Uterus (tissue), 4 donors: ENCODE measurements at regions of chr3 and their contacts with region 1.

Region 1: GRCh38 chr3:155805802-155806618 is at the start of gene C3orf33:
- DNase-seq: peak; percentile 38 to 62
- H3K4me3 ChIP-seq: peak within 1 kb of the TSS; percentile 70 to 79
- H3K27ac ChIP-seq: peak within 1 kb of the TSS; percentile 75 to 85
- H3K4me1 ChIP-seq: no peaks in the 10 kb centered on the region
- H3K27me3 ChIP-seq: no peaks in the 10 kb centered on the region
- CTCF ChIP-seq: peak; percentile 62 to 95 (median 82)
- POLR2A ChIP-seq: peak in 1 of 2 donors; percentile 38
- total RNA-seq, gene C3orf33: 0.88 to 9.0 (median 2.7) TPM

Region 2: GRCh38 chr3:155701882-155702465 is 104.0 kb before region 1 on chr3:
- intact Hi-C with region 1: no loop called
- DNase-seq: no peak
- H3K4me3 ChIP-seq: no peak overlapping the region
- H3K27ac ChIP-seq: no peak overlapping the region
- H3K4me1 ChIP-seq: no peaks in the 10 kb centered on the region
- H3K27me3 ChIP-seq: no peaks in the 10 kb centered on the region
- CTCF ChIP-seq: peak; percentile 47 to 71 (median 64)
- POLR2A ChIP-seq: no peak

Region 3: GRCh38 chr3:155870133-155870944 is 64.3 kb after region 1 on chr3 and contains the start of gene GMPS:
- intact Hi-C with region 1: loop called (anchors 10 kb)
- DNase-seq: peak; percentile 92 to 97
- H3K4me3 ChIP-seq: peak within 1 kb of the TSS; percentile 91 to 94
- H3K27ac ChIP-seq: peak within 1 kb of the TSS; percentile 96 to 98
- H3K4me1 ChIP-seq: peaks cover 0 to 7% of the 10 kb centered on the region in 2 donors
- H3K27me3 ChIP-seq: no peaks in the 10 kb centered on the region
- CTCF ChIP-seq: peak; percentile 55 to 73 (median 72)
- POLR2A ChIP-seq: peak; percentile 51 to 82
- total RNA-seq, gene GMPS: 10.5 to 71.7 (median 51.3) TPM

Region 4: DNA sequence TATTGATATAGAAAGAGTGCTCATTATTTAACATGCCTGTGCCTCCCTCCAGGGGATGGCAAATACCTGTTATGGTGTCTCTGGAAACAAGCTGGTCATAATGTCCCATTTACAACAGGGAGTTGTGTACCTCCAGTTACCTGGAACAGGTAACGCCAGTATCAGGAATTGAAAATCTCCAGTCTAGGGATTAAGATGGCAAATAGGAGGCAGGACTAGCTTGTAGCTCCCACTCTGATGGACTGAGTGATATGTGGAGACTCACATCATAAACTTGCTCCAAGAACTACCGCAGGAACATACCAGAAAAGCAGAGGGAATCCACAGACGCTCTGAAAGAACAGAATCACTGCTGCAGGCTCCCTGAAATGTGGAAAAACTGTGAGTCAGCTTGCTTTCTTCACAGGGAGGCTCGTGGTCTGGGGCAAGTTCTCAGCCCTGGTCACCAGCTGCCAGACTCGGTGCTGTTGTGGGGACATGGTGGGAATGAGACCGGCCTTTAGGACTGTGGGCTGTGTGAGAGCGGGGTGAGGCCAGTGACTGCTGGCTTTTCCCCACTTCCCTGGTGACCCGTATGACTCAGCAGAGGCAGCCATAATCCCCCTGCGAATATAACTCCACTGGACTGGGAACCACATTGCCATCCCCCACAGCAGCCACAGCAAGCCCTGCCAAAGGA is 411.8 kb after region 1 on chr3:
- intact Hi-C with region 1: no loop called
- DNase-seq: no peak
- H3K4me3 ChIP-seq: no peak overlapping the region
- H3K27ac ChIP-seq: no peak overlapping the region
- H3K4me1 ChIP-seq: no peaks in the 10 kb centered on the region
- H3K27me3 ChIP-seq: no peaks in the 10 kb centered on the region
- CTCF ChIP-seq: no peak
- POLR2A ChIP-seq: no peak